ENCODE measurements at regions of chr10 and their contacts with region 1.

Region 1: DNA sequence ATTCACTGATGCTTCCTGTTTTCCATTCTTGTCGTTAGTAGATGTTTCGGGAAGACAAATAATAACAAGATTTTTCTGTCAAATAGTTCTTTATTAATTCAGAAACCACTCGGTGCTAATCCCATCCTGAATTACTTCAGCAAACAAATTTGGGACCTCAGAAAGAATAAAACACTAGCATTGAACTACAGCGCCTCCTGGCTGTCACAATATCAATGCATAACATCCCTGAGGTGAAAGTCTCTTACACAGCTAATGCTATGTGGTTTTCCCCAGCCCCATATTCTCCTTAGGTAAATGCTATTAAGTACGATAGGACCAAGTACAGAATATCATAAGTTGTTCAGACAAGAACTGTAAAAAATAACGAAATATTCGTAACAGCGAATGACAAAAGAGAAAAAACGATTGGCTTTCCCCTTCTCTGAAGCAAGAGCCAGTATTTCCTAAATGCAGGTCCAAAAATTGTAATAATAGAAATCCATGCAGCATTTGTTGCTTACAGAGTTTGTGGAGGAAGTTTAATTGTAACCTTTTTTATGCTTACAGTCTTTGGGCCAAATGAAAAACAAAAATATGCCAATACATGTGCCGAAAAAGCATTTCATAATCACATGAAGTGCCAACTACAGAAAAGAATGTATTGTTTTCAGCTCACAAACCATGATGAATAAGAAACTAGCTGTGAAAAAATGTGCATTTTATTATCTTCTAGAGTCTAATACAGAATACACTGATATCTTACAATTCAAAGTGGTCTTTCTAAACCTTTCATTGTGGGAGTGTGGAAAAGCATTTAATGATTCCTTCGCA is 47.3 kb downstream of the MYPN start:
- DNase-seq: peak; percentile 34
- CTCF ChIP-seq: peak; percentile 76

Region 2: DNA sequence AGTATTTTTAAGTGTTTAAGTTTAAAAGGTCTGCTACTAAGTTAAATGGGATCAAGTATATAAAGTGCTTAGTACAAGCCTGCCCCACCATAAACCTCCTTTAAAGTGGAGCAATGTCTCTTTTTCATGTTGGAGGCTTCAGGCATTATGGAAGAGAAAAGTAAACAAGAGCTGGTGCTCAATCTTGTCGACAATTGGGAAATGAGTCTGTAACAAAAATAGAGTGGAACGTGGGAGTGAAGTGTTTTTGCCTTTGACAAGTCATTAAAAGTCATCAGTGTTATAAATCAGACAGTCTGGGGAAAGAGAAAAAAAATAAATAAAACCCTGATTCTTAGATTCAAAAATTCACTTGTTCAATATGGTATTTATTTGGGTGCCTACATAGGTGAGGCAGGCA is 363.3 kb before region 1 on chr10:
- CTCF ChIA-PET with region 1: interaction called, 89 read pairs
- POLR2A ChIA-PET with region 1: no interaction called
- DNase-seq: no peak
- CTCF ChIP-seq: no peak

Region 3: DNA sequence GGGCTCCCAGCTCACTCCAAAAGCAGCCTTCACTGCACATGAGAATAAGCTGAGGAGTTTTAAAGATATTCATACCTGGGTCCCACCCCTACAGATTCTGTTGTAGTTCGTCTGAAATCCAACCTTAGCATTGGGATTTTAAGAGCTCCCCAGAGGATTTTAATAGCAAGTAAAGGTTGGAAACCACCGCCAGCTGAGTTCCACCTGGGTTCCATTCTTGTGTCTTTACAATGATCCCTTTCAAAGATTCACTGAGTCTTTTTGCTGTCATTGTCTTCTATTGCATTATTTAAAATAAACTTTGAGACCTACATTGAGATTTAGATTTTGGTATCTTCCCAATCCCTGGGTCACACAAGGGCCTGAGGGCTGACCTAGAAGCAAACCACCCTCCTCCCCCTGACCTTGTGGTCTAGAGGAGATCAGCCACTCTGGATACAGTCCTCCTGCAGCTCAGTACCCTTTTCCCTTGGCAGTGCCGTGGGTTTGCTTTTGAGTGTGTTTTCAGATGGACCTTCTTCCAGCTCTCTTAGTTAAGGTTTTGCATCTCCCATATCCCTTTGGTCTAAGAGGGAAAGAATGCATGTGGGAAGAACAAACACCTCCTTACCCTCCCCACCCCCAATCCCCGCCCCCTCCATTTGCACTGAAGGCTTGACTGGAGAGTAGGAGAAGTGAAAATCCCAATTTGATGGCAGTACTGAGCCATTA is 294.7 kb before region 1 on chr10:
- CTCF ChIA-PET with region 1: interaction called, 202 read pairs
- POLR2A ChIA-PET with region 1: no interaction called
- DNase-seq: no peak
- CTCF ChIP-seq: no peak

Region 4: DNA sequence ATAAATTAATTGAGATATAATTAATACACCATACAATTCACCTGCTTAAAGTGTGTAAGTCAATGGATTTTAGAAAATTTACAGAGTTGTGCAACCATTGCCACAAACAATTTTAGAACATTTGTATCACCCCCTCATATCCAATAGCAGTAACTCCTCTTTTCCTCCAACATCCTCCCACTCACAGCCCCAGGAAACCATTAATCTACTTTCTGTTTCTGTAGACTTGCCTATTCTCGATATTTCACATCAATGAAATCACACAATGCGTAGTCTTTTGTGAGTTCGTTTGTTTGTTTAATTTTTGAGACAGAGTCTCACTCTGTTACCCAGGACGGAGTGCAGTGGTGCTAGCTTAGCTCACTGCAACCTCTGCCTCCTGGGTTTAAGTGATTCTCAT is 67.8 kb before region 1 on chr10:
- CTCF ChIA-PET with region 1: interaction called, 12 read pairs
- POLR2A ChIA-PET with region 1: no interaction called
- DNase-seq: peak; percentile 17
- CTCF ChIP-seq: no peak

Region 5: DNA sequence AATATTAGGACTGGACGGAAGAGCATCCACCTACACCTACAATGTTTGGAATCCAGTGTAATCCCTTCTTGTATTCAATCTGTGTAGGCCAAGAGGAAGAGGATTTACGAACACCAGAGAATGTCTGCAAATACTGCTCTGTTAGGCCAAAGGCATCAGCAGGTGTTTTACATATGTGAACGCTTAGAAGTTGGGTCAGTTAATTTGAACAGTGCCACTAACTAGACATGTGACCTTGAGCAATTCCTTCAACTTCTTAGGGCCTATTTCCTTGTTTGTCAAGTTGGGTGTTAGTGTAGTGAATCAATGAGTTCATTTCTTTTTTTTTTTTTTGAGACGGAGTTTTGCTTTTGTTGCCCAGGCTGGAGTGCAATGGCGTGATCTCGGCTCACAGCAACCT is 11.9 kb before region 1 on chr10:
- CTCF ChIA-PET with region 1: interaction called, 15 read pairs
- POLR2A ChIA-PET with region 1: no interaction called
- DNase-seq: no peak
- CTCF ChIP-seq: no peak

Region 6: DNA sequence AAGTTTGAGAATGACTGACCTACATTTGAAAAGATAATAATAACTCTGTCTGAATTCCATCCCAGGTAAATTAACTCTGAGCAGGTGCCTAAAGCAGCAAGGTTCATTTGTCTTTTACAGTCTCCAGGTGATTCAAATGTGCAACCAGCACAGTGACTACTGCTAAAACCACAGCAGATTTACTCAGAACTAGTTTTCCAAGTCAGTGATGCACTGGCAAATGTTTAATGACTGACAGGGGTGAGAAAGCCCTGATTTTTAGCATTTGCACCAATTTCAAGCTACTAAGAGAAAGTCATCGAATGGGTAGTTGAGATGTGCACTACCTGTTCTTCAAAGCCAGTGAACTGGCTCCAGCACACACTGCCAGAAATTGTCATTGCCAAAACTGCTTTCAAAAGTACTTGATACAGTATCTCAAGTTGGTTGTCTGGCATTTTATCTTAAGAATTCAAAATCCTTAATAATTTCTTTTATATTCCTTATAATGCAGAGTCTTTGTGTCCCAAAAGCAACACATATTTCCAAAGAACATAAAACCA is 15.0 kb after region 1 on chr10:
- CTCF ChIA-PET with region 1: interaction called, 40 read pairs
- POLR2A ChIA-PET with region 1: no interaction called
- DNase-seq: no peak
- CTCF ChIP-seq: no peak

Measured in GM10248 (cell line).